Stomach (tissue), 19 donors: ENCODE measurements at regions of chr11 and their contacts with region 1.

Region 1: GRCh38 chr11:130427581-130428315 is 661 bp downstream of the ADAMTS8 start:
- DNase-seq: peak in 1 of 2 donors; percentile 65
- H3K4me3 ChIP-seq: peak overlapping the region; percentile 52 to 60 (median 54)
- H3K27ac ChIP-seq: peak overlapping the region in 4 of 5 donors; percentile 14 to 90 (median 34)
- H3K4me1 ChIP-seq: peaks cover 7 to 32% (median 24%) of the 10 kb centered on the region in 4 donors
- H3K27me3 ChIP-seq: peaks cover 6 to 81% (median 53%) of the 10 kb centered on the region in 3 donors
- CTCF ChIP-seq: peak in 1 of 7 experiments; percentile 15
- EP300 ChIP-seq: no peak
- POLR2A ChIP-seq: no peak

Region 2: DNA sequence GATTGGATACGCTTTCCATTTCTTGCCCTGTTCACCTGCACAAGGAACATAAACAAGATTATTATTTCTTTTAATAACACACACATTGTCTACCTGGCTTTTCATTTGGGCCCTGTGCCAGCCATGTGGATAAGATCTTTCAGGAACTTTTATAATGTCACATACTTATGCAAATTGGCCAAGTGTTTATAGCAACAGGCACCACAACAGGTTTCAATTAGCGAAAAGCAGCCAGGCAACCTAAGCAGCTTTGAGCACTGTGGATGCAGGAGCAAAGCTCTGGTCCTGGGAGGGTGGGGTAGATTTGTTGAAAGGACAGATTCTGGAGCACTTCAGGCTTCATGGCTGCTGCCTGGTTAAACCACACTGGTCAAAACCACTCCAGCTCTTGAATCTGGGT is 834.6 kb before region 1 on chr11:
- intact Hi-C with region 1: no loop called
- DNase-seq: peak in 1 of 2 donors; percentile 71
- H3K4me3 ChIP-seq: no peak overlapping the region
- H3K27ac ChIP-seq: no peak overlapping the region
- H3K4me1 ChIP-seq: no peaks in the 10 kb centered on the region
- H3K27me3 ChIP-seq: peaks cover 0 to 5% (median 0%) of the 10 kb centered on the region in 3 donors
- CTCF ChIP-seq: no peak
- EP300 ChIP-seq: no peak
- POLR2A ChIP-seq: no peak

Region 3: GRCh38 chr11:130213143-130213978 is 214.4 kb before region 1 on chr11:
- intact Hi-C with region 1: loop called (anchors 10 kb)
- DNase-seq: peak; percentile 74 to 85
- H3K4me3 ChIP-seq: no peak overlapping the region
- H3K27ac ChIP-seq: no peak overlapping the region
- H3K4me1 ChIP-seq: peaks cover 8 to 13% (median 9%) of the 10 kb centered on the region in 4 donors
- H3K27me3 ChIP-seq: peaks cover 0 to 4% (median 0%) of the 10 kb centered on the region in 3 donors
- CTCF ChIP-seq: peak in 5 of 7 experiments; percentile 85 to 97 (median 93)
- EP300 ChIP-seq: no peak
- POLR2A ChIP-seq: no peak